WTC11 (cell line): ENCODE measurements at regions of chr1 and their contacts with region 1.

Region 1: DNA sequence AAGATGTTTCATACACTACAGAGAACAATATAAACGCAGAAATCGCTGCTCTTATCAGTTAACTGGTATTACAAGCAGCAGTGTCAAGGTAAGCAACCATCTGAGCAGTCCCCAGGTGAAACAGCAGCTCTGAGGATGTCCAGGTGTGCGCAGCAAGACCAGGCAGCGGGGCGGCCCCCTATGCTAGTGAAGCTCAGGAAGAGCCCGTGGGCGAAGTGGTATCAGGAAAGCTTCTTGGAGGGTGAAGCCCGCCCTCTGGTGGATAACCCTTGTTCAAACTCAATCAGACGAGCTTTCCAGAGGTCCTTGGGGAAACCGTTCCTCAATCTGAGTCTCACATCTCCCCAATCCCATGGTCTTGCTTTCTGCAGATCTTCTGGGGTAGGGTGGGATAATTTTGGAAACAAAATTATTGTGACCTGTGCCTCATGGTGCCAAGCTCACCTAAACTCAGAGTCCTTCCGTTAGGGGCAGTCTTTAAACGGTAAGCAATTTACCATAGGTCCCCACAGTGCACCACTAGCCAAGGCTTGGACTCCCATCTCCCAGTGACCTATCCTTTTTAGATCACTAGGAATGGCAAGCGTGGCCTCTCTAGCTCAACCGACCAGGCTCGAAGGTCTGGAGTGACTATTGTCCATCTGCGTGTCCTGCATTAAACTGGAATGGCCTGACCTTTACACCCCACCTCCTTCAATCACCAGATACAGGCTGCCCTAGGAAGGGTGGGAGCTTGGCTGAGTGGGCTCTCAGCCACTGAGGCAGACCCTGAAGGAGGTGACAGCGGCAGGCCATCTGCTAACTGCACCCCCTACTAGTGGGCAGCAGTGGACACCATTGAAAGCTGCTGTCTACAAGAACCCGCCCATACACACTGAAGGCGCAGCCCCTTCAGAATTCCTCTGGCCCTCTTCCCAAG is 13.6 kb upstream of the FAM110D start:
- DNase-seq: peak; percentile 86
- ATAC-seq: peak; percentile 97
- H3K4me3 Mint-ChIP-seq: no peak overlapping the region
- H3K27ac Mint-ChIP-seq: no peak overlapping the region
- H3K4me1 Mint-ChIP-seq: no peaks in the 10 kb centered on the region
- H3K27me3 Mint-ChIP-seq: peaks cover 58% of the 10 kb centered on the region
- CTCF ChIP-seq: peak; percentile 58

Region 2: DNA sequence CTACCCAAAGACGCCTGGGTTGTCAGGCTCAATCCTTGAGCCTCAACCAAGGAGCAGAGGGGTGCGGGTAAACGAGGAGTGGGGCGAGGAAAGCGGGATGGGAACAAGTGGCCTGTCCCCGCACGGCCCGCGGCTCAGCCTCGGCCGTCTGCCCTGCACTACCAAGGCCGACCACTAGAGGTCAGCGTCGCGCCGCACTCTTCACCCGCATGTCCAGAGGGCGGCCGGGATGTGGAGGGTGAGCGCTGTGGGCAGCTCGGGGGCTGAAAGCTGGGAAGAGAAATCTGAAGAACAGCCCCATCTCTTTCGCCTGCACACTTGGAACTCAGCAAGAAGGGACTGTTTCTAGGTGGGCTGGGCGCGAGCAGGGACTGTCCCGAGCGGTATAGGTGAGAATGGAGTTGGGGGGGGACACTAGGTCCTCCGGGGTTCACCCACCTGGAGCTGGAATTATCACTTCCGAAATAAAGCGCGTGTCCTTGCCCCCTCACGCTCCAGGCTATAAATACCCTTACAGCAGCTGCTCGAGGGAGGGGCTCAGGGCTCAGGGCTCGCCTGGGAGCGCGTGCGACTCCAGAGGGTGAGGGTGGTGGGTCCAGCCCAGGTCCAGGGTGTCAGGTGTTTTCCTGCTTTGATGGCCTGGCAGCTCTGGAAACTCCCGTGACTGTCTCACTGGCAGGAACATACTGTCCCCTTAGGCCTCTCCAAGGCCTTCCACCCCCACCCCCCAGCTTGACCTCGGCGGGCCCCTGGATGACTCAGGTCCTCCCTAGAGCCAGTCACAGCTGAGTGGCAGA is 109.1 kb before region 1 on chr1:
- CTCF ChIA-PET with region 1: interaction called, 136 read pairs
- POLR2A ChIA-PET with region 1: no interaction called
- DNase-seq: peak; percentile 86
- ATAC-seq: peak; percentile 78
- H3K4me3 Mint-ChIP-seq: peak overlapping the region; percentile 94
- H3K27ac Mint-ChIP-seq: no peak overlapping the region
- H3K4me1 Mint-ChIP-seq: peaks cover 8% of the 10 kb centered on the region
- H3K27me3 Mint-ChIP-seq: peaks cover 54% of the 10 kb centered on the region
- CTCF ChIP-seq: peak; percentile 100

Region 3: DNA sequence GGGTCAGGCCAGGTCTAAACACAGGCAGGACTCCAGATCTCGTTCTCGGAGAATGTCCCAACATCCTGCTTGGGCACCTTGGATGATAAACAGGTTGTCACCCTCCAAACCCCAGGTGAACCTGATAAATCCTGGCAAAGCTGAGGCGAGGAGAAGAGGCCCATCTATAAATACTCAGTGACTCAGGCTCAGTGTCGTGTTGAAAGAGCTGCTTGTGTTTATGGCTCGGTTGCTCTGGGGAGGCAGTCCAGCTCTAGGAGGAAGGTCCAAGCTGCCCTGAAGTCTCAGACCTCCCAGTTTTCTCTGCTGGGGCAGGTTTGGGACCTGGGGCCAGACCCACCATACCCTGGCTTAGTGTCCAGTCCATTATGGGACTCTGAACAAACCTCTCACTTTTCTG is 62.1 kb before region 1 on chr1:
- CTCF ChIA-PET with region 1: interaction called, 10 read pairs
- POLR2A ChIA-PET with region 1: no interaction called
- DNase-seq: no peak
- ATAC-seq: no peak
- H3K4me3 Mint-ChIP-seq: no peak overlapping the region
- H3K27ac Mint-ChIP-seq: no peak overlapping the region
- H3K4me1 Mint-ChIP-seq: peaks cover 12% of the 10 kb centered on the region
- H3K27me3 Mint-ChIP-seq: peaks cover 3% of the 10 kb centered on the region
- CTCF ChIP-seq: no peak

Region 4: DNA sequence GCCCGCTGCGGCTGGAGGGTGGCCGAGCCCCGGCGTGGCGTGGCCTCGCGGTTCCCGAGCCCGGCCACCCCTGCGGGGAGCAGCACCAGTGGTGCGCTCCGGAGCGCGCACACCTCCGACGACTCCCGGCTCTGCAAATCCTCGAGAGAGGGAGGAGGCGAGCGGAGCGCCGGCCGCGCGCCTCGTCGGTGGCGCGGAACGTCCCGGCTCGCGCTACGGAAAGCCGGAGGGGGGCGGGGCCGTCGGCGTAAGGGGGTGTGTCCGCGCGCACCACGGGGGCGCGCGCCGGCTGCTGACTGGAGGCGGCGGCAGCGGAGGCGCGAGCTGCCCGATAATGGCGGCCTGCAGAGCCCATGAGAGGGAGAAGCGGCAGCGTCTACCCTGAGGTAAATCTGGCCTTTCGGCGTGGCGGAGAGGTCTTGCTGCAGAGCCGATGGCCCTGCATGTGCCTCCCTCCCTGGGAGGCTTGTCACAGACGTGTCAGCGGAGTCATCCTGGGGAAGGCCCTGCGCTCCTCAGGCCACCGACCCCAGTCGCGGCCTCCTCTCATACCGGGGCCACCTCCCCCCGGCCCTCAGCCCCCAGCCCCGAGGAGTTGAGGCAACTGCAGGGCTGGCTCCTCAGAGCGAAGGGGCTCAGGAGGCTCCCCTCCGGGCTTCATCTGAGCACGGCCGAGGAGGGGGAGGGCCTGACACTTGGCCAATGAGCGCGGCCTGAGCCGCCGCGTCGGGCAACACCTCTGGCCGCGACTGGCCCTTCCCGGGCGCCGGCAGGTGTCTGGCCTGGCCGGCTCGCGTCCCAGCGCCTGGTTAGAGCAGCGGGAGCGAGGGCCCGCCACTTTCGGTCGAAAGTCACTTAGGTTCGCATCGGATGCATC is 33.5 kb before region 1 on chr1 and contains the start of gene PDIK1L:
- CTCF ChIA-PET with region 1: interaction called, 41 read pairs
- POLR2A ChIA-PET with region 1: no interaction called
- DNase-seq: peak; percentile 92
- ATAC-seq: peak; percentile 89
- H3K4me3 Mint-ChIP-seq: peak within 1 kb of the TSS; percentile 92
- H3K27ac Mint-ChIP-seq: peak within 1 kb of the TSS; percentile 99
- H3K4me1 Mint-ChIP-seq: peaks cover 25% of the 10 kb centered on the region
- H3K27me3 Mint-ChIP-seq: peaks cover 17% of the 10 kb centered on the region
- CTCF ChIP-seq: no peak
- total RNA-seq, gene PDIK1L: 4.0 to 5.5 TPM (median 4.3 TPM) in 3 replicates

Region 5: DNA sequence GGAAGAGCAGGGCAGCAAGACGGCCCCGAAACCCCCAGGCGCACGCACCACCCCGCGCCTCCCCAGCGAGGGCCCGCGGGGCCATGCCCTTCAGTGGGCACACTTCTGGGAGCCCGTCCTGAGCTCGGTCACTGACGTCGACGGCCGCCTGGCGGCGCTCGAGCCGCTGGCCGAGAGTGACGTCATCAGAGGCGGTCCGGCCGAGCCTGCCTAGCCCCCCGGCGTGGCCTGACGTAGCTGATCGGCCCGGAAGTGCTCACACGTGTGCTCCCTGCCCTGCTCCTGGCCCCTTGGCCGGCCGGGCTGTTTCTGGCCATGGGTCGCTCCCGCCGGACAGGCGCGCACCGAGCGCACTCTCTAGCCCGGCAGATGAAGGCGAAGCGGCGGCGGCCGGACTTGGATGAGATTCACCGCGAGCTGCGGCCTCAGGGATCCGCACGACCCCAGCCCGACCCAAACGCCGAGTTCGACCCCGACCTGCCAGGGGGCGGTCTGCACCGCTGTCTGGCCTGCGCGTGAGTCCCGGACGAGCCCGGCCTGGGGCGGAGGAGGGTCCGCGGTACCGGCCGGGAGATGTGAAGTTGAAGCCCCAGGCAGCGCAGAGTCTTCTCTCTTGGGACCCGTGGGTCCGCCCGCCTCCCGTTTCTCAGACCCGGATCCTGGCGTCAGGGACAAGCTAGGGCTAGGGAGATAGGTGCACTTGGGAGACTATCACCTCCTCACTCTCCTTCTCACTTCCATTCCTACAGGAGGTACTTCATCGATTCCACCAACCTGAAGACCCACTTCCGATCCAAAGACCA is 24.6 kb after region 1 on chr1 and contains the start of gene ZNF593:
- CTCF ChIA-PET with region 1: interaction called, 26 read pairs
- POLR2A ChIA-PET with region 1: interaction called, 3 read pairs
- DNase-seq: peak; percentile 92
- ATAC-seq: peak; percentile 76
- H3K4me3 Mint-ChIP-seq: peak within 1 kb of the TSS; percentile 85
- H3K27ac Mint-ChIP-seq: peak within 1 kb of the TSS; percentile 65; the same call in 1 of the 2 replicates
- H3K4me1 Mint-ChIP-seq: peaks cover 31% of the 10 kb centered on the region
- H3K27me3 Mint-ChIP-seq: peaks cover 14% of the 10 kb centered on the region
- CTCF ChIP-seq: peak; percentile 81
- total RNA-seq, gene ZNF593: 39.6 to 49.1 TPM (median 43.3 TPM) in 3 replicates